ENCODE measurements at regions of chr7 and their contacts with region 1.

Region 1: GRCh38 chr7:16982640-16983350 is 101.0 kb upstream of the AGR3 start:
- DNase-seq: peak in 1 of 5 donors; percentile 19
- ATAC-seq: peak in 1 of 4 donors; percentile 39
- H3K4me3 ChIP-seq: no peak overlapping the region
- H3K27ac ChIP-seq: no peak overlapping the region
- H3K4me1 ChIP-seq: peaks cover 0 to 20% (median 3%) of the 10 kb centered on the region in 12 donors
- H3K27me3 ChIP-seq: no peaks in the 10 kb centered on the region
- CTCF ChIP-seq: peak; percentile 79 to 98 (median 94)
- POLR2A ChIP-seq: no peak

Region 2: DNA sequence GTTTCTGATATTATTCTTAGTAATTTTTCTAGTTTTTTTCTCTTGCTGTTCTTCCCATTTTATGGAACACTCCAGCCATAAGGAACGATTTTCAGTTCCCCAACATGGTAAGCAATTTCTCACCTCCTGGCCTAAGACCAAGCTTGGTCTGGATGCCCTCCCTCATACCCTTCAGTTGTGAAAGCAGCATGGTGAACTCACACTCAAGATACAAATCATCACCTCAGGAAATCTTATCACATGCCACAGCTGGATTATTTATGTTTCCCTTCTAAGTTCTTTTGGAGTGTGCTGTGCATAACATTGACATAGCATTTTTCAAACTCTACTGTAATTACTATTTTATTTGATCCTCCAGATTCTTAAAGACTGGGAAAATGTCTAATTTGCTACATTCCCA is 1637.6 kb before region 1 on chr7:
- intact Hi-C with region 1: no loop called
- DNase-seq: no peak
- ATAC-seq: no peak
- H3K4me3 ChIP-seq: no peak overlapping the region
- H3K27ac ChIP-seq: no peak overlapping the region
- H3K4me1 ChIP-seq: no peaks in the 10 kb centered on the region
- H3K27me3 ChIP-seq: no peaks in the 10 kb centered on the region
- CTCF ChIP-seq: no peak
- POLR2A ChIP-seq: no peak

Region 3: DNA sequence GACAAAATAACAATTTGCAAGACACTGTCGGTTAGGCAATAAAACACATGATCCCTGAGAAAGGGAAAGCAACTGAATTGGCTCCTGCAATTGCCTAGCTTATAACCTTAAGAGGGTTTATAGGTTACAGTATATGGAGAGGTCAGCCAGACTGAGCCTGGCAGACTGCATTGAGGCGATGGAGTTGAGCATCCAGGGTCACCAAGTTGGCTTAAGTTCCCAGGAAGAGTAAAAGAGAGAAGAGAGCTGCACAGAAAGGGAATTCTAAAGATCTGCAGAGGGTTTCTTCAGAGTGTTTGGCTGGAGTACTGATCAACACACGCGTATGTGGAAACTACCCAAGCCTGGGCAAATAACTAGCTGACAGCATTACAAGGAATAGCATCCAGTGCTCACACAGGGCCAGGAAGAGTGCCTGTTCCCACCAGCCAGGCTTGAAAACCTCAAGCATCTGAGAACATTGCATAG is 348.5 kb before region 1 on chr7:
- intact Hi-C with region 1: no loop called
- DNase-seq: no peak
- ATAC-seq: peak; percentile 48 to 84 (median 64)
- H3K4me3 ChIP-seq: no peak overlapping the region
- H3K27ac ChIP-seq: peak overlapping the region in 8 of 12 donors; percentile 1 to 63 (median 8)
- H3K4me1 ChIP-seq: peaks cover 5 to 51% (median 39%) of the 10 kb centered on the region in 12 donors
- H3K27me3 ChIP-seq: no peaks in the 10 kb centered on the region
- CTCF ChIP-seq: no peak
- POLR2A ChIP-seq: no peak

Region 4: GRCh38 chr7:16926283-16926682 is 56.5 kb before region 1 on chr7:
- intact Hi-C with region 1: loop called in 1 of 10 experiments (anchors 5 kb)
- DNase-seq: peak in 4 of 5 donors; percentile 15 to 42 (median 32)
- ATAC-seq: peak in 3 of 4 donors; percentile 63 to 81 (median 81)
- H3K4me3 ChIP-seq: peak overlapping the region in 1 of 12 donors; percentile 16
- H3K27ac ChIP-seq: no peak overlapping the region
- H3K4me1 ChIP-seq: peaks cover 0 to 16% (median 0%) of the 10 kb centered on the region in 12 donors
- H3K27me3 ChIP-seq: no peaks in the 10 kb centered on the region
- CTCF ChIP-seq: peak; percentile 43 to 79 (median 59)
- POLR2A ChIP-seq: no peak

Region 5: DNA sequence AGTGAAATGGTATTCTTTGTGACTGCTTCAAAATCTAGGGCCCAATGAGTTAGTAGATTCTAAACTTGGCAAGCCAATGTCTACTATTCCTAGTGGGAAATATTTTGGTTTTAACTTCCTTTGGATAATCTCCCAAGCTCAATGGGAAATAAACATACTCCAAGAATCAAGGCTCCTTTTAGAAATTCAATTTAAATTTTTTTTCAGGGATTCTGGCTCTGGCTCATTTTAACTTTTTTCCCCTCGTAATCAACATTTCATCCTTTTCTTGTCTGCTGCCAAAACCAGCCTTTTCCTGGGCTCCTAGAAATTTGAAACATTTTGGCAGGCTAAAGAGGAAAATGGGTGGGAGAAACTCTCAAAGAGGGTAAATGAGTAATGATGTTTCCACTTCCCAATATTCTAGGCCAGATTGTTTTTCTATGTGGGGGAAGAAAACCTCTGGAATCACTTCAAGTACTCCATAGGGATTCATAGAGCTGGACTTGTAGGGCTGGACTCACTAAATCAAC is 15.4 kb before region 1 on chr7:
- intact Hi-C with region 1: no loop called
- DNase-seq: peak in 1 of 5 donors; percentile 25
- ATAC-seq: peak; percentile 75 to 96 (median 85)
- H3K4me3 ChIP-seq: no peak overlapping the region
- H3K27ac ChIP-seq: peak overlapping the region in 9 of 12 donors; percentile 38 to 74 (median 65)
- H3K4me1 ChIP-seq: peaks cover 0 to 22% (median 4%) of the 10 kb centered on the region in 12 donors
- H3K27me3 ChIP-seq: no peaks in the 10 kb centered on the region
- CTCF ChIP-seq: no peak
- POLR2A ChIP-seq: no peak

Region 6: GRCh38 chr7:17523813-17524741 is 541.3 kb after region 1 on chr7:
- intact Hi-C with region 1: loop called in 1 of 10 experiments (anchors 10 kb)
- DNase-seq: no peak
- ATAC-seq: peak in 3 of 4 donors; percentile 41 to 66 (median 59)
- H3K4me3 ChIP-seq: no peak overlapping the region
- H3K27ac ChIP-seq: peak overlapping the region in 5 of 12 donors; percentile 2 to 35 (median 8)
- H3K4me1 ChIP-seq: peaks cover 0 to 49% (median 9%) of the 10 kb centered on the region in 12 donors
- H3K27me3 ChIP-seq: no peaks in the 10 kb centered on the region
- CTCF ChIP-seq: no peak
- POLR2A ChIP-seq: no peak

Region 7: DNA sequence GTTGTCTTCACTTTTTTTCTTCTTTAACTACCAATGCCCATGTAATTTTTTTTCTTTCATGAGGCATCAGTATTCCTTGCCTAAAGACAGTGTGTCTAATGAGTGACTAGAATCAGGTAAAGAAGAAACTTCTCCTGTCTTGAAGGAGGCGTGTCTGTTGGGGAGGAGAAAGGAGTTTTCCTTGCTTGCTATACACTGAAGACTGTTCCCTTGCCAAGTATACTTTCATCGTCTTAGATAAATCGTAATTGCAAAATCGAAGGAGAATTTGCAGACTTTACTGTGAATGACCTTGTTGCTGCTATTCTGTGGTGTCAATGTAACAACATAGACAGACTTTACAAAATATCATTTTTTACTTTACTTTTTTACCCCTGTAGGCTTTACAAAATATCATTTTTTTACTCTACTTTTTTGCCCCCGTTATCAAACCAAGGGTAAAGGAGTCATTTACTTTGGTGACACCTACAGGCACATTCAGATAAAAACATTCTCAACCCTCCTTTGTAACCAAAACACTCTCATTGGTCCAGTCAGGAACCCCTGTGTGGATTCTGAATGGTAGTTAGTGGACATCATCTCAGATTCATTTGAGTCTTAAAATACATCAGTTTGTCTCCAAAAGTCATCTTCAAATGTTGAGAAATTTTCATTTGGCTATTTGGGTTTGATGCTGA is 548.1 kb after region 1 on chr7:
- intact Hi-C with region 1: loop called in 9 of 10 experiments (anchors 5 to 10 kb)
- DNase-seq: no peak
- ATAC-seq: peak in 2 of 4 donors; percentile 36 to 39
- H3K4me3 ChIP-seq: peak overlapping the region in 2 of 12 donors; percentile 8 to 11
- H3K27ac ChIP-seq: no peak overlapping the region
- H3K4me1 ChIP-seq: peaks cover 0 to 21% (median 0%) of the 10 kb centered on the region in 12 donors
- H3K27me3 ChIP-seq: no peaks in the 10 kb centered on the region
- CTCF ChIP-seq: peak; percentile 13 to 61 (median 32)
- POLR2A ChIP-seq: no peak

Region 8: GRCh38 chr7:17640730-17641377 is 658.1 kb after region 1 on chr7:
- intact Hi-C with region 1: loop called in 9 of 10 experiments (anchors 5 to 10 kb)
- DNase-seq: no peak
- ATAC-seq: no peak
- H3K4me3 ChIP-seq: no peak overlapping the region
- H3K27ac ChIP-seq: no peak overlapping the region
- H3K4me1 ChIP-seq: no peaks in the 10 kb centered on the region
- H3K27me3 ChIP-seq: no peaks in the 10 kb centered on the region
- CTCF ChIP-seq: peak; percentile 46 to 78 (median 69)
- POLR2A ChIP-seq: no peak

Region 9: GRCh38 chr7:17646253-17646956 is 663.6 kb after region 1 on chr7:
- intact Hi-C with region 1: loop called in 9 of 10 experiments (anchors 5 to 10 kb)
- DNase-seq: no peak
- ATAC-seq: peak in 1 of 4 donors; percentile 9
- H3K4me3 ChIP-seq: no peak overlapping the region
- H3K27ac ChIP-seq: no peak overlapping the region
- H3K4me1 ChIP-seq: peaks cover 0 to 16% (median 0%) of the 10 kb centered on the region in 12 donors
- H3K27me3 ChIP-seq: no peaks in the 10 kb centered on the region
- CTCF ChIP-seq: peak in 9 of 12 donors; percentile 20 to 57 (median 37)
- POLR2A ChIP-seq: no peak